Naive thymus-derived CD8-positive, alpha-beta T cell (primary cell): ENCODE measurements at regions of chr14 and their contacts with region 1.

Region 1: GRCh38 chr14:49862089-49862673 is 9.6 kb upstream of the NEMF start:
- DNase-seq: peak; percentile 71 to 97 (median 86)
- ATAC-seq: peak; percentile 24 to 31
- H3K4me3 Mint-ChIP-seq: no peak overlapping the region
- H3K27ac Mint-ChIP-seq: no peak overlapping the region
- H3K4me1 Mint-ChIP-seq: peaks cover 0 to 28% (median 15%) of the 10 kb centered on the region in 4 donors
- H3K27me3 Mint-ChIP-seq: peaks cover 0 to 8% (median 0%) of the 10 kb centered on the region in 5 donors

Region 2: GRCh38 chr14:49633640-49634546 is 228.3 kb before region 1 on chr14:
- POLR2A ChIA-PET with region 1: interaction called, 31 read pairs
- DNase-seq: peak; percentile 90 to 97 (median 94)
- ATAC-seq: peak; percentile 78 to 82
- H3K4me3 Mint-ChIP-seq: peak overlapping the region; percentile 92 to 99 (median 96)
- H3K27ac Mint-ChIP-seq: peak overlapping the region; percentile 90 to 98 (median 93)
- H3K4me1 Mint-ChIP-seq: peaks cover 15 to 65% (median 56%) of the 10 kb centered on the region in 4 donors
- H3K27me3 Mint-ChIP-seq: no peaks in the 10 kb centered on the region

Region 3: DNA sequence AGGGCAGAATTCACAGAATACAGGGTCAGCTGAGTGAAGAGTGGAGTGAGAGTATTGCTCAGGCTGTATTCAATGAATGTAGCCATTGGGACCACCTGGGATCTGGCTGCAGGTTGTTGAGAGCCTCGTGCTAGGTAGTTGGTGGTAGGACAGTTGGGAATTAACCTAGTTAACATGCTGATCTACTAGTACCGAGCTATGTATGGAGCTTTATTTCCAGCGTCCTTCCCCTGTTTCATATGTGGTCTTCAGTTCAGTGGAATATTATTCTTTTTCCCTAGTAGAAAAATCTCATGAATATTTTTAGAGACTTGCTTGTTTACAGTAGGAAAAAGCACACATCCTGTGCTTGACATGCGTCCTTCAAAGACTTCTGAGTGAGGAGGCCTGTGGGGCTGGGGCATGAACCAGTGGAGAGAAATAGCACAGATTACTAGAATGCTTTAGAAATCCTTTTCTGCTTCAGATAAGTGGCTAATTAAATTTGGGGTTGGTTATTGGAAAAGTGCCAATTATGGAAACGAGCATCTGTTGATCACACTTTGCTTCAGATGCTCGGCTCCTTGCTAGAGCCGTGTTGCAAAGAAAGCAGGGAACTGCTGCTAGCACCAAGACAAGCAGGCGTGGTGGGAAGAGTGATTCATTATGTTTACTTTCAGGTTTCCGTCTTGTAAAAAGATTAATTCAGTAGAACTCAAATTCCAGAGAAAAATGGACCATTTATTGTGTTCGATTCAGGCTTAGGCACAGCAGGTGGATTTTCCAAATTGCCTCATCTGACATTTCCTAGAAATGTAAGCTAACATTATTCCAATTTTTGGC is 84.3 kb after region 1 on chr14:
- POLR2A ChIA-PET with region 1: interaction called, 16 read pairs
- DNase-seq: peak in 6 of 10 donors; percentile 9 to 64 (median 26)
- ATAC-seq: peak; percentile 75 to 76
- H3K4me3 Mint-ChIP-seq: peak overlapping the region; percentile 6 to 82 (median 70)
- H3K27ac Mint-ChIP-seq: peak overlapping the region; percentile 87 to 99 (median 92)
- H3K4me1 Mint-ChIP-seq: peaks cover 42 to 77% (median 70%) of the 10 kb centered on the region in 4 donors
- H3K27me3 Mint-ChIP-seq: no peaks in the 10 kb centered on the region

Region 4: GRCh38 chr14:50045039-50045711 is 183.0 kb after region 1 on chr14:
- POLR2A ChIA-PET with region 1: interaction called, 22 read pairs
- DNase-seq: peak in 9 of 10 donors; percentile 23 to 83 (median 62)
- ATAC-seq: peak; percentile 71 to 82
- H3K4me3 Mint-ChIP-seq: peak overlapping the region; percentile 6 to 87 (median 64)
- H3K27ac Mint-ChIP-seq: peak overlapping the region; percentile 85 to 98 (median 92)
- H3K4me1 Mint-ChIP-seq: peaks cover 49 to 76% (median 76%) of the 10 kb centered on the region in 4 donors
- H3K27me3 Mint-ChIP-seq: no peaks in the 10 kb centered on the region

Region 5: DNA sequence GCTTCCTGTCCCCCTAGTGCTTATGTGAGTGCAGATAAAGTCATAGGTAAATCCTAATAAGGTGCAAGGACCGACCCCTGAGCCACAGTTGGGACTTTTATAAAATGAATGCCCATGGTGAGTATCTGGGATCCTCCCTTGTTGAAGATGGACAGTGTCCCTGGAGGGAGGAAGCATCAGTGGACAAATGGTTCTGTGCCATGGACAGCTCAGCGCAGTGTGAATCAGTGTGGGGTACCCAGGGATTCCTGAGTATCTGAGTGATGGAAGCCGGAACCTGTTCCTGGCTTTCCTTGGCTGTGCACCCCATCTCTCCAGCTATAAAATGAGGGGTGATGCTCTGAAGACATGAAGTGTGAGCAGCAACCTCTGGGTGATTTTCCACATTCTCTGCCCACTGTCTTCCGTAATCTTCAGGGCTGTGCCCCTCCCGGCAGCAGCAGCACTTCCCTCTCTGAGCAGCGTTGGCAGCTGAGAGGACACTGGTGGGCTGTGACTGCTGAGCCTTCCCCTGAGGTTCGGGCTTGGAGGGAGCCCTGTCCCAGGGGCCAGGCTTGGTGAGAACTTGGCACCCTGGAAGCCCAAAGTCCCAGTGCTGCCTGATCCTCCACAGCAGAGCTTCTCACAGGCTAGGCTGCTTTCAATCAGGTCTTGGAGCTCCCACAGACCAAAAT is 229.2 kb after region 1 on chr14:
- POLR2A ChIA-PET with region 1: interaction called, 35 read pairs
- DNase-seq: no peak
- ATAC-seq: peak; percentile 9 to 12
- H3K4me3 Mint-ChIP-seq: peak overlapping the region in 8 of 10 donors; percentile 34 to 70 (median 54)
- H3K27ac Mint-ChIP-seq: peak overlapping the region; percentile 73 to 94 (median 91)
- H3K4me1 Mint-ChIP-seq: peaks cover 48 to 90% (median 87%) of the 10 kb centered on the region in 4 donors
- H3K27me3 Mint-ChIP-seq: no peaks in the 10 kb centered on the region

Region 6: DNA sequence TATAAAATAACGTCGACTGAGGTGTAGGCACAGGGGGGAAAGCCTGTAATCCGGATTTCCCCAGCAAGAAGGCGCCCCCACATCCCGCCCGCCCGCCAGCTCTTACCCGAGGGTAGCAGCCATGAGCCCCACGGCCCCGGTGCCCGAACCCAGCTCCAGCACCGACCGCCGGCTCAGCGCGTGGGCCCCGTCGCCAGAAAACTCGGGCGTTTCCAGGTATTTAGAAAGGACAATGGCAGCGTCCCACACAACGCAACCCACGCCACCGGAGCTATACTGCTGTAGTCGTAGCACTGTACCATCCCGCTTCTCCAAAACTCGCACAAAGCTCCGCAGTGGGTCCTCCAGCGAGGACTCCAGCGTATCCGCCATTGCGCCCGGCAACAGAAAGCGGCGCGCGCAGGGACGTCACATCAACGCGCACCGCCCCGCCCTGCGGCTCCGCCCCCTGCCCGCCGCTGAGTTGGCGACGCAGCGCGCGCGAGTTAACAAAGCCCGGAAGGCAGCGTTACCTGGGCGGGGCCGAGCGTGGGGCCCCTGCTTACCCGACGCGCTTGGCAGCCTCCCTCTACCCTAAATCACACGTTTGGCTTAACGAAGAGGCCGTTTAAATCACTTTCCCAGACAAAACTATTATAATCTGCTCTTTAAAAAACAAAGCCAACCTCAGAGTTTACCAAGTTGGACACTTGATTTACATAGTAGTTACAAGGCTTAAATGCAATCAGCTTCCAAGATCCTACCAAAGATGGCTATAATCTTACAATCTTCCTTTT is 254.2 kb after region 1 on chr14 and contains the start of gene VCPKMT:
- POLR2A ChIA-PET with region 1: interaction called, 47 read pairs
- DNase-seq: peak; percentile 90 to 98 (median 96)
- ATAC-seq: peak; percentile 95 to 96
- H3K4me3 Mint-ChIP-seq: peak within 1 kb of the TSS; percentile 91 to 99 (median 97)
- H3K27ac Mint-ChIP-seq: peak within 1 kb of the TSS; percentile 96 to 99 (median 99)
- H3K4me1 Mint-ChIP-seq: peaks cover 6 to 41% (median 24%) of the 10 kb centered on the region in 4 donors
- H3K27me3 Mint-ChIP-seq: no peaks in the 10 kb centered on the region
- polyA plus RNA-seq, gene VCPKMT: 8.8 to 10.4 (median 9.5) TPM